Sciatic nerve (tissue), 2 donors: ENCODE measurements at regions of chr18 and their contacts with region 1.

Region 1: DNA sequence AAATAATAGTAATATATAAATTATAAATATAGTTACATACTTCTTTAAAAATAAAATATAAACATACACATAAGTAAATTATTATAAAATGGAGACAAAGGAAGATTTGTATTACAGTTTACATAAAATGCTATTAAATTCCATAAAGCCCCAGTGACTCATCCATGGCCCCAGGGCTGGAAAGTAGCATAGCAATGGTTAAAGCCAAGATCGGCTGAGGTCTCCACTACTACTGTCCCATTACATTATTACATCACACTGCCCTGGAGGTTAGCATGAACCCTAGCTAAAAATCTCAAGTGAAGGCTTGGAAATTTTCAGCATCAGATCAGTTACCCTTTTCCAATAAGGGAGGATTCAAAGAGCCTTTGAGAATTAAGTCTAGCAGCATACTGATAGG is 936.2 kb downstream of the DSC3 start:
- DNase-seq: no peak
- ATAC-seq: no peak

Region 2: GRCh38 chr18:28267878-28268625 is 1838.3 kb before region 1 on chr18:
- intact Hi-C with region 1: loop called (anchors 5 kb)
- DNase-seq: no peak
- ATAC-seq: no peak

Region 3: DNA sequence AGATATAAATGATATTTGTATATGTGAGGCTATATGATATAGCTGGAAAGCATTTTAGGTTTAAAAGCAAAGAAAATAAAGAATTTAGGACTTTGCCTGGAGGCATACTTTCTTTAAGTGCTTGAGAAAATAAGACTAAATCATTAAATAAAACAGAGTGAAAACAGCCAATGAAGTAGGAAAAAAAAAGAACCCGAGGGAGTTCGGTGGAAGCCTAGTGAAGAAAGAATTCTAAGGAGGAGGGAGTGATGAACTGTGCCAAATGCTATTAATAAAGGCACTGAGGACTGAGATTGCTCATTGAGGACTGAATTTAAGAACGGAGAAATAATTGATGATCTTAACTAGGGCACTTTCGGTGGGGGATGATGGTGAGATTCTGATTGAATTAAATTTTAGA is 362.7 kb after region 1 on chr18:
- intact Hi-C with region 1: no loop called
- DNase-seq: no peak
- ATAC-seq: no peak